ENCODE measurements at regions of chr5 and their contacts with region 1.

Region 1: GRCh38 chr5:105782501-105782900 is 1888.2 kb downstream of the EFNA5 start:
- DNase-seq: no peak
- H3K4me3 ChIP-seq: no peak overlapping the region
- H3K27ac ChIP-seq: no peak overlapping the region
- H3K4me1 ChIP-seq: no peaks in the 10 kb centered on the region
- H3K27me3 ChIP-seq: no peaks in the 10 kb centered on the region
- CTCF ChIP-seq: no peak

Region 2: GRCh38 chr5:104347119-104347708 is 1435.3 kb before region 1 on chr5:
- CTCF ChIA-PET with region 1: interaction called, 10 read pairs
- POLR2A ChIA-PET with region 1: no interaction called
- intact Hi-C with region 1: no loop called
- DNase-seq: no peak
- H3K4me3 ChIP-seq: no peak overlapping the region
- H3K27ac ChIP-seq: no peak overlapping the region
- H3K4me1 ChIP-seq: no peaks in the 10 kb centered on the region
- H3K27me3 ChIP-seq: no peaks in the 10 kb centered on the region
- CTCF ChIP-seq: peak; percentile 68